GM10248 (cell line): ENCODE measurements at regions of chr6 and their contacts with region 1.

Region 1: DNA sequence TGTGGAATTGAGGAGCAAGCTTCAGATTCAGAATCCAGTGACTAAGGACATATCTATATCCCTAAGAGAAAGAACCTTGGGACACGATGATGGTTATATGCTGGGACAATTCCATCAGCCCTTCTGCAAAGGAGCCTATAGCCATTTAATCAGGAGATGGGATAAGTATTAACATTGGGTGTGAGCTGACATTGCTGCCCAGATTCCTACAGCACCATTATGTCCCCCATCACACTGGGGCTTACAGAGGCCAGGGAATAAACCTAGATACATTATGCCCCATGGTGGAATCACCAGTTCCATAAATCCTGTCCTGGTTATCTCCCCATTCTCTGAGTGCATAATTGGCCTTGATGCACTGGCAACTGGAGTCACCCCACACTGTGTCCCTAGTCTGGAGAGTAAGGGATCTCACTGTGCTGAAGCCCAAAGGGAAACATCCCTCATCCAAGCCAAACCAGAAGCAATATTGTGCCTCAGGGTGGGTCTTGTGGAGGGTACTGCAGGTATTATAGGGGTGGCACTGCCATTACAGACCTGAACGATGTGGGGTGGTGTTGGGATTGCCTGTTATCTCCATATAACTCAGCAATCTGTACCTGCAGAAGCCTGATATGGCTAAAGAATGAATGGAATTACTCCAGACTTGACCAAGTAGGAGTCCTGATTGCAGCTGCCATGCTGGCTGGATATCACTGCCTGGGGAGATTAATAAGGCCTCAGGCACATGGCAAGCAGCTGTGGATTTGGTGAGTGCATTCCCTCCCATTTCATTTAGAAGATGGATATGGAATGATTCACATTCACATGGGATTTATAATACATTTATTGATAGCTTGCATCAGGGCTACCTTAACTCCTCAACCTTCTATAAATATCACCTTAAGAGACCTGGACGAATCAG is 5.0 kb downstream of the HLA-A start:
- DNase-seq: no peak
- CTCF ChIP-seq: no peak

Region 2: GRCh38 chr6:29926413-29927274 is 20.7 kb before region 1 on chr6:
- CTCF ChIA-PET with region 1: no interaction called
- POLR2A ChIA-PET with region 1: interaction called, 15 read pairs
- DNase-seq: peak; percentile 83
- CTCF ChIP-seq: no peak

Region 3: GRCh38 chr6:30006170-30007131 is 59.1 kb after region 1 on chr6:
- CTCF ChIA-PET with region 1: no interaction called
- POLR2A ChIA-PET with region 1: no interaction called
- DNase-seq: peak; percentile 25
- CTCF ChIP-seq: no peak

Region 4: DNA sequence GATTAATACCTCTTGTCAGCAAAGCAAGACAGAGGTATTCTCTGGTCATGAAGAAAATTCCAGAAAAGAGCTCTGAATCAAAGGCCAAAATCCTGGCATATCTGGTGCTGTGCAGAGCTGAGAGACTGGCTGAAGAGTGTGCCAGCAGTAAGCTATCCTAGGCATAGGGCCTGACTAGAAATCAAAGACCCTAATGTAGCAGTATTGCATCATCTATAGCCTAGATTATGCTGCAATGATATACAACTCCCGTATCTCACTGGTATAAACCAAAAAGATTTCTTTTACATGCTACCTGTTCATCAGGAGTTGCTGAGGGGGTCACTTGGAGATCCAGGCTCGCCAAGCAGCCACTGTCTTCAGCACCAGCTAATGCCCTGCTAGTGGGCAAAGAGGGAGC is 348.5 kb after region 1 on chr6:
- CTCF ChIA-PET with region 1: no interaction called
- POLR2A ChIA-PET with region 1: no interaction called
- DNase-seq: no peak
- CTCF ChIP-seq: no peak